ENCODE measurements at regions of chr6 and their contacts with region 1.

Region 1: GRCh38 chr6:26270903-26271667 is 93.9 kb upstream of the BTN3A2 start:
- DNase-seq: peak; percentile 90
- ATAC-seq: peak; percentile 19
- H3K4me3 ChIP-seq: peak overlapping the region; percentile 63 to 88 (median 75)
- H3K4me3 Mint-ChIP-seq: no peak overlapping the region
- H3K27ac ChIP-seq: peak overlapping the region; percentile 79 to 86
- H3K27ac Mint-ChIP-seq: no peak overlapping the region
- H3K4me1 ChIP-seq: peaks cover 15 to 37% of the 10 kb centered on the region in 2 donors
- H3K4me1 Mint-ChIP-seq: peaks cover 20% of the 10 kb centered on the region
- H3K27me3 ChIP-seq: no peaks in the 10 kb centered on the region
- H3K27me3 Mint-ChIP-seq: no peaks in the 10 kb centered on the region
- CTCF ChIP-seq: no peak

Region 2: DNA sequence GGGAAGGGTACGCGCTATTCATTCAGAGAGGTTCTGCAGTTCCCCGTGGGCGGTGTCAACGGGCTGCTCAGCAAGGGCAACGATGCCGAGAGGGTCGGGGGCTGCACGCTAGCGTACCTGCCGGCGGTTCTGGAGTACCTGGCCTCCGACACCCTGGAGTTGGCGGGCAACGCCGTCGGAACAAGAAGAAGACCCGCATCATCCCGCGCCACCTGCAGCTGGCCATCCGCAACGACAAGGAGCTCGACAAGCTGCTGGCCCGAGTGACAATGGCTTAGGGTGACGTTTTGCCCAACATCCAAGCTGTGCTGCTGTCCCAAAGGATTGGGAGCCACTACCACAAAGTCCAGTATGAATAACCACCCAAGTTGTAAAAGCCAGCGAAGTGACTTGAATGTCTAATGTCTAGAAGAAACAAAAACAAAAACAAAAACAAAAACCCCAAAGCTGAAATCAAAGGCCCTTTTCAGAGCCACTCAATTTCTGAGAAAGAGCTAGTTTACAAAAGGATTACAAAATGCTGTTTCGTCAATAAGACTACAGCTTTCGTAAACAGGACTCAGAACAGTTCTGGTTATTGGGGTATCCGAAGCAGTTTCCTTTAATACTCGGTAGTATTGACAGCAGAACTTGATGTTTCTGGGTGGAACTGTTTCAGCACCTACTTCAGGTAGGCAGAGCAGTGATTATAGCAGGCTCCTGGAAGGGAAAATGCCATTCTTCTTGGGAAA is 538.5 kb before region 1 on chr6:
- CTCF ChIA-PET with region 1: no interaction called
- POLR2A ChIA-PET with region 1: no interaction called
- intact Hi-C with region 1: no loop called
- DNase-seq: no peak
- ATAC-seq: no peak
- H3K4me3 ChIP-seq: no peak overlapping the region
- H3K4me3 Mint-ChIP-seq: no peak overlapping the region
- H3K27ac ChIP-seq: no peak overlapping the region
- H3K27ac Mint-ChIP-seq: no peak overlapping the region
- H3K4me1 ChIP-seq: no peaks in the 10 kb centered on the region
- H3K4me1 Mint-ChIP-seq: no peaks in the 10 kb centered on the region
- H3K27me3 ChIP-seq: peaks cover 0 to 23% (median 8%) of the 10 kb centered on the region in 4 experiments
- H3K27me3 Mint-ChIP-seq: peaks cover 52% of the 10 kb centered on the region
- CTCF ChIP-seq: no peak

Region 3: DNA sequence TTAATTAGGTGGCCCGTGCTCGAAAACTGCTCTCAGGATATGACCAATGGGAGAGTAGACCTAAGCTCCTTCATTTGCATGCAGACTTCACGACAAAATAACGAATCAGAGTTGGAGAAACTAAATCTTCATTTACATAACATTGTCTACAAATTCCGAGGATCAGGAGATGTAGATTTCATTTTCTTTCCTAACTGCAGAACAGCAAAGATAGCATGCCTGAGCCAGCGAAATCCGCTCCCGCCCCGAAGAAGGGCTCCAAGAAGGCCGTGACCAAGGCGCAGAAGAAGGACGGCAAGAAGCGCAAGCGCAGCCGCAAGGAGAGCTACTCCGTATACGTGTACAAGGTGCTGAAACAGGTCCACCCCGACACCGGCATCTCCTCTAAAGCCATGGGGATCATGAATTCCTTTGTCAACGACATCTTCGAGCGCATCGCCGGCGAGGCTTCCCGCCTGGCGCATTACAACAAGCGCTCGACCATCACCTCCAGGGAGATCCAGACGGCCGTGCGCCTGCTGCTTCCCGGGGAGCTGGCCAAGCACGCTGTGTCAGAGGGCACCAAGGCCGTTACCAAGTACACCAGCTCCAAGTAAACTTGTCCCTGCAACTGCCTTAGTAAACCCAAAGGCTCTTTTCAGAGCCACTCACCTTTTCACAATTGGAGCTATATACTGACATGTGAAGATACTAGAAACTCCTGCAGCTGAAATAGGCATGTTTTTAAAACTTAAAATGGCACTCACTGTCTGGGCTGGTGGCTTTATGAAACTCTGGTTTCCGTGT is 87.3 kb before region 1 on chr6:
- CTCF ChIA-PET with region 1: interaction called, 5 read pairs
- POLR2A ChIA-PET with region 1: interaction called, 22 read pairs
- intact Hi-C with region 1: no loop called
- DNase-seq: peak; percentile 84
- ATAC-seq: peak; percentile 89
- H3K4me3 ChIP-seq: peak overlapping the region; percentile 51 to 73 (median 71)
- H3K4me3 Mint-ChIP-seq: peak overlapping the region; percentile 91
- H3K27ac ChIP-seq: peak overlapping the region in 1 of 2 donors; percentile 61
- H3K27ac Mint-ChIP-seq: peak overlapping the region; percentile 85
- H3K4me1 ChIP-seq: peaks cover 13 to 22% of the 10 kb centered on the region in 2 donors
- H3K4me1 Mint-ChIP-seq: peaks cover 25% of the 10 kb centered on the region
- H3K27me3 ChIP-seq: no peaks in the 10 kb centered on the region
- H3K27me3 Mint-ChIP-seq: no peaks in the 10 kb centered on the region
- CTCF ChIP-seq: no peak

Region 4: GRCh38 chr6:26223650-26224546 is 47.2 kb before region 1 on chr6:
- CTCF ChIA-PET with region 1: no interaction called
- POLR2A ChIA-PET with region 1: interaction called, 10 read pairs
- intact Hi-C with region 1: no loop called
- DNase-seq: peak; percentile 81
- ATAC-seq: peak; percentile 87
- H3K4me3 ChIP-seq: peak overlapping the region; percentile 56 to 97 (median 75)
- H3K4me3 Mint-ChIP-seq: no peak overlapping the region
- H3K27ac ChIP-seq: peak overlapping the region; percentile 85 to 95
- H3K27ac Mint-ChIP-seq: no peak overlapping the region
- H3K4me1 ChIP-seq: peaks cover 4 to 14% of the 10 kb centered on the region in 2 donors
- H3K4me1 Mint-ChIP-seq: peaks cover 8% of the 10 kb centered on the region
- H3K27me3 ChIP-seq: no peaks in the 10 kb centered on the region
- H3K27me3 Mint-ChIP-seq: no peaks in the 10 kb centered on the region
- CTCF ChIP-seq: no peak

Region 5: DNA sequence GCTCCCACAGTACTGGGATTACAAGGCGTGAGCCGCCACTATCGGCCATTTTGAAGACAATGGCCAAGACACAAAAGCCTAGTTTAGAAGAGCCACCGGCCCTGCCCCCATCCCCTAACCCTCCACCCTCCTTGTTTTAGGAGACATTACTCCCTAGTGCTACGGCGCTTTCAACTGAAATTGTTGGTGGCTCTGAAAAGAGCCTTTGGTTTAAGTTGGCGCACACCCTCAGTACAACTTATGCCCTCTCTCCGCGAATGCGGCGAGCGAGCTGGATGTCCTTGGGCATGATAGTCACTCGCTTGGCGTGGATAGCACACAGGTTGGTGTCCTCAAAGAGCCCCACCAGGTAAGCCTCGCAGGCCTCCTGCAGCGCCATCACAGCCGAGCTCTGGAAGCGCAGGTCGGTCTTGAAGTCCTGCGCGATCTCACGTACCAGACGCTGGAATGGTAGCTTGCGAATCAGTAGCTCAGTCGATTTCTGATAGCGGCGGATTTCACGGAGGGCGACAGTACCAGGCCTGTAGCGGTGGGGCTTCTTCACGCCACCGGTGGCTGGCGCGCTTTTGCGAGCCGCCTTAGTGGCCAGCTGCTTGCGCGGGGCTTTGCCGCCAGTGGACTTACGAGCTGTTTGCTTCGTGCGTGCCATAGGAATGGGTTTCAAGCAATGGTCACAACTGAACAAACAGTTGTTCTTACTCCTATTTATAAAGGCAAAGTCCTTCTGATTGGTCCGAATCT is 21.0 kb before region 1 on chr6:
- CTCF ChIA-PET with region 1: interaction called, 5 read pairs
- POLR2A ChIA-PET with region 1: interaction called, 3 read pairs
- intact Hi-C with region 1: loop called (anchors 1 kb)
- DNase-seq: peak; percentile 88
- ATAC-seq: peak; percentile 67
- H3K4me3 ChIP-seq: peak overlapping the region; percentile 68 to 90 (median 83)
- H3K4me3 Mint-ChIP-seq: peak overlapping the region; percentile 97
- H3K27ac ChIP-seq: peak overlapping the region; percentile 73 to 74
- H3K27ac Mint-ChIP-seq: peak overlapping the region; percentile 97
- H3K4me1 ChIP-seq: peaks cover 8 to 16% of the 10 kb centered on the region in 2 donors
- H3K4me1 Mint-ChIP-seq: peaks cover 43% of the 10 kb centered on the region
- H3K27me3 ChIP-seq: no peaks in the 10 kb centered on the region
- H3K27me3 Mint-ChIP-seq: no peaks in the 10 kb centered on the region
- CTCF ChIP-seq: peak; percentile 70

Region 6: DNA sequence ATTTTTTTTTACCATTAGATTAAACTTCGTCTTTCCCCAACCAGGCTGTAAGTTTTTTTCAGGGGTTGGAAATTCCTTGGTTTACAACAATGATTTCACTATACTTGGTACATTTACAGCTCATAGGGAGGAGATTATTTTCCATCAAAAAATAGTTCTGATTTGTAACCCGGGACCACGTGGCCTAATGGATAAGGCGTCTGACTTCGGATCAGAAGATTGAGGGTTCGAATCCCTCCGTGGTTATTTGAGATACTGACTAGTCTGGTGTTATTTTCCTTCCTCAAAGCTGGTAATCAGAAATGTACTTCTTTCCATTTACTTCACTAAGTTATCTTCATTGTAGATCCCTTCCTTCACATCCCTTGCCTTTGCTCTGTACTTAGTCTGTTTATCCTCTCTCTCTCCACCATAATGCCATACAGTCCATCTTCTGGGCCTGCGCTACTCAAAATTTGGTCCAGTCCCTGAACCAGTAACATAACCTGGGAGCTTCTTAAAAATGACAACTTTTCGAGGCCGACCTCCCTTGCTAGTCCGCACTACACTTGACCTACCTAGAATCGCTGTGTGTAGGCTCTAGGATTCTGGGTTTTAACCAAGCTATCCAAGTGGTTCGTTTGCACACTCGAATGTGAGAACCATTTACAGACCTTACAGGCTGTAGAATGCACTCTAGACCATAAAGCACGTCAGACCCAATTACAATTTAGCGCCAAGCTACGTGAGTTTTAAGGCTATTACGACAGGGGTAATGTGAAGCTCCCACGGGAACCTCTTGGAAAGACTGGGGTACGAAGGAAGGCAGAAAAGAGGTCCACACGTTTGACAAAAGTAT is 51.8 kb after region 1 on chr6:
- CTCF ChIA-PET with region 1: interaction called, 4 read pairs
- POLR2A ChIA-PET with region 1: interaction called, 10 read pairs
- intact Hi-C with region 1: no loop called
- DNase-seq: peak; percentile 83
- ATAC-seq: peak; percentile 59
- H3K4me3 ChIP-seq: peak overlapping the region in 4 of 5 experiments; percentile 49 to 74 (median 59)
- H3K4me3 Mint-ChIP-seq: peak overlapping the region; percentile 74
- H3K27ac ChIP-seq: no peak overlapping the region
- H3K27ac Mint-ChIP-seq: peak overlapping the region; percentile 70
- H3K4me1 ChIP-seq: peaks cover 14 to 31% of the 10 kb centered on the region in 2 donors
- H3K4me1 Mint-ChIP-seq: peaks cover 22% of the 10 kb centered on the region
- H3K27me3 ChIP-seq: peaks cover 0 to 43% (median 25%) of the 10 kb centered on the region in 4 experiments
- H3K27me3 Mint-ChIP-seq: peaks cover 26% of the 10 kb centered on the region
- CTCF ChIP-seq: no peak

Region 7: GRCh38 chr6:26385734-26386125 is 114.6 kb after region 1 on chr6:
- CTCF ChIA-PET with region 1: no interaction called
- POLR2A ChIA-PET with region 1: no interaction called
- intact Hi-C with region 1: no loop called
- DNase-seq: no peak
- ATAC-seq: no peak
- H3K4me3 ChIP-seq: no peak overlapping the region
- H3K4me3 Mint-ChIP-seq: peak overlapping the region; percentile 79
- H3K27ac ChIP-seq: peak overlapping the region in 1 of 2 donors; percentile 37
- H3K27ac Mint-ChIP-seq: peak overlapping the region; percentile 85
- H3K4me1 ChIP-seq: peaks cover 35 to 49% of the 10 kb centered on the region in 2 donors
- H3K4me1 Mint-ChIP-seq: peaks cover 69% of the 10 kb centered on the region
- H3K27me3 ChIP-seq: no peaks in the 10 kb centered on the region
- H3K27me3 Mint-ChIP-seq: no peaks in the 10 kb centered on the region
- CTCF ChIP-seq: no peak